ENCODE measurements at regions of chr15 and their contacts with region 1.

Region 1: DNA sequence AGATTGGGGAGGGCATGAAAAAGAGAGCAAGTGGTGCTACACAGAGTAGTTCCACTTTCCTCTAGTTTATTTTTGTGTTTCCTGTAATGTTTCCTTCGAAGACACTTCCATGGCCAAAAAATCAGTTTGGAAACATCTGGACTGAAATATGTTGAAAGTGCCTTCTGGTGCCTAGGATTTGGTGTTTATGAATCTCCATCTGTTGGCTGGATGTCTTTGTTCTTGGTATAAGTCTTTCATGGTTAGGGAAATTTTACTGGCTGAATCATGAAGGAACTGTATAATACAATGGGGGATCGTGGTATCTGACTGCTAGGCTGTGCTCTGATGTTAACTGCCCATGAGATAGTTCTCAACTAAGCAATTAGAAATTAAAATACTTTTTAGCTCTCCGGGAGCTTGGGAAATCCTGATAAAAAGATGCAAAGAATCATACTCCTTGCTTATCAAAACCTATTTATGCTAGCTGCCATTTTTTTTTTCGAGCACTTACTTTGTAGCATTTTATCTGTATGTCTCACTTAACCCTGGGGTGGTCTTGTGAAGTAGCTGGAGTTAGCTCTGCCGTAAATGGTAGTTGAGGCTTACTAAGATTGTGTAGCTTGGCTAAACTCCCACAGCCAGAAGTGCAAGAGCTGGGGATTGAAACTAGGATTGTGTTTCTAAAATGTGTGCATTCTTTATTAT is 21.9 kb downstream of the AKAP13 start:
- DNase-seq: no peak
- ATAC-seq: peak; percentile 68
- H3K4me3 Mint-ChIP-seq: peak overlapping the region; percentile 2
- H3K27ac Mint-ChIP-seq: peak overlapping the region; percentile 33
- H3K4me1 Mint-ChIP-seq: peaks cover 78% of the 10 kb centered on the region
- H3K27me3 Mint-ChIP-seq: no peaks in the 10 kb centered on the region

Region 2: GRCh38 chr15:84797212-84797611 is 605.1 kb before region 1 on chr15:
- CTCF ChIA-PET with region 1: no interaction called
- POLR2A ChIA-PET with region 1: no interaction called
- intact Hi-C with region 1: no loop called
- DNase-seq: no peak
- ATAC-seq: no peak
- H3K4me3 Mint-ChIP-seq: no peak overlapping the region
- H3K27ac Mint-ChIP-seq: no peak overlapping the region
- H3K4me1 Mint-ChIP-seq: no peaks in the 10 kb centered on the region
- H3K27me3 Mint-ChIP-seq: no peaks in the 10 kb centered on the region

Region 3: DNA sequence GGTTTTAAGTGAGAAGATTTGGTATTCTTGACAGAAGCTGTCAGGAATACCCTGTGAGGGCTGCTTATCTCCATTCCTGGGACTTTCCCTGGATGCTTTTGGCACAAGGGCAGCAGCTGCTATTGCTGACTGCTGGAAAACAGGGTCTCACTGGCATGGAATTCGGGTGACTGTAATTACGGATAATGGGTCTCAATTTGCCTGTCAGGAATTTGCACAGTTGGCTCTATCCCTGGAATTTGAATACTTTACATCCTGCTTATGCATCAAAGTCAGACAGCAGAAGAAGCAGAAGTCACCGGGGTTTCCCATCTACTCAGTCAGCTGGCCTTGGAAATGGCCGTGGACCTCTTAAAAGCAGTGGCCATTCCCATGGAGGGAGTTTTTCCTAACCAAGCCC is 47.9 kb before region 1 on chr15:
- CTCF ChIA-PET with region 1: no interaction called
- POLR2A ChIA-PET with region 1: no interaction called
- intact Hi-C with region 1: loop called in 1 of 2 experiments (anchors 1 kb)
- DNase-seq: no peak
- ATAC-seq: no peak
- H3K4me3 Mint-ChIP-seq: no peak overlapping the region
- H3K27ac Mint-ChIP-seq: no peak overlapping the region
- H3K4me1 Mint-ChIP-seq: peaks cover 10% of the 10 kb centered on the region
- H3K27me3 Mint-ChIP-seq: peaks cover 3% of the 10 kb centered on the region